ENCODE measurements at regions of chr5 and their contacts with region 1.

Region 1: DNA sequence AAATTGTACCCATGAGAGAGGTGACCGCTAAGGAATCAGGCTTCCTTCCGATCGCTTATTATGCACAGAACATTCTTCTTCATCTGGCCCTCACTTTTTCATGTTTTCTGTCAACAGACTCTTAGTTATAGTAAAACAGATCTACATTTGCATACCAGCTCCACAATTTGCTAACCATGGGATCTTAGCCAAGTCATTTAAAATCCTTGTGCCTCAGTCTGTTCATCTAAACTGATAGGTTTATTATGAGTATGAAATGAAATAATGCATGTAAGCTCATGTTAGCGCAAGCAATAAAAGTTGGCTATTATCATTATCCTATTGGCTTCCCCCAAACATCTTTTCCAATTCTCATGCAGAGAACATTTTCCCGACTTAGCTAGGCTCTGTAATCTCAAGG is 42.3 kb downstream of the FGF1 start:
- DNase-seq: no peak
- ATAC-seq: no peak

Region 2: DNA sequence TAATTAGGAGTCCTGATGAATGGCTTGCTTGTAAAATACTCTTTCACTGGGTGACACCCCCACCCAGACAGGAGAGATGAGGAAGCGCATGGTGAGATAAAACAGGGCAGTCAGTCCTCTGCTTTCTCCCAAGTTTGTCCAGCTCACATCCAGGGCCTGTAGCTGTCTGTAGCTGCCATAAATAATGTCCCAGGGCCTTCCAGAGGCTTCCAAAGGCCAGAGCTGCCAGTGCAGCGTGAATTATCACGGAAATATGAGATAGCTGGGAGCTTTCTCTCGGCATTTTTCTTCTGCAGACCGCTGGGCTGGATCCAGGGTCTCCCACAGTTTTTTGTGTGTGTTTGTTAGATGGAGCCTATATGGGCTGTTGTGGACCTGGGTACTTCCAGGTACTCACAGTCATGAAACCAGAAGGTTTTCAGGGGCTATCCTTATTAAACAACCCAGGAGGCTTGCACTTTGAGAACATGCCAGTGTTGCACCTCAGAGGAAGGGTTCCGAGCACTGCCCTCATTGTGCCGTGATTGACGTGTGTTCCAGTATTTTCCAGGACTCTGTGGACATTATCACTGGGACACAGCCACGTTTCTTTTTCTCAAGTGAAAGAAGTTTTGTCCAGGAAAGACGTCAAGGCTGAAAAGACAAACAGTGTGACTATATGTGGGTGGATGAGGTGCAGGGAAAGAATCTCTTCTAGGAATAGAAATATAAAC is 75.2 kb before region 1 on chr5:
- intact Hi-C with region 1: loop called in 1 of 2 experiments (anchors 2 kb)
- DNase-seq: peak; percentile 51
- ATAC-seq: peak; percentile 59 to 63

Region 3: GRCh38 chr5:142737179-142737578 is 93.5 kb after region 1 on chr5:
- intact Hi-C with region 1: no loop called
- DNase-seq: no peak
- ATAC-seq: no peak

Measured in left cardiac atrium (tissue), 4 donors.